ENCODE measurements at regions of chr1 and their contacts with region 1.

Region 1: DNA sequence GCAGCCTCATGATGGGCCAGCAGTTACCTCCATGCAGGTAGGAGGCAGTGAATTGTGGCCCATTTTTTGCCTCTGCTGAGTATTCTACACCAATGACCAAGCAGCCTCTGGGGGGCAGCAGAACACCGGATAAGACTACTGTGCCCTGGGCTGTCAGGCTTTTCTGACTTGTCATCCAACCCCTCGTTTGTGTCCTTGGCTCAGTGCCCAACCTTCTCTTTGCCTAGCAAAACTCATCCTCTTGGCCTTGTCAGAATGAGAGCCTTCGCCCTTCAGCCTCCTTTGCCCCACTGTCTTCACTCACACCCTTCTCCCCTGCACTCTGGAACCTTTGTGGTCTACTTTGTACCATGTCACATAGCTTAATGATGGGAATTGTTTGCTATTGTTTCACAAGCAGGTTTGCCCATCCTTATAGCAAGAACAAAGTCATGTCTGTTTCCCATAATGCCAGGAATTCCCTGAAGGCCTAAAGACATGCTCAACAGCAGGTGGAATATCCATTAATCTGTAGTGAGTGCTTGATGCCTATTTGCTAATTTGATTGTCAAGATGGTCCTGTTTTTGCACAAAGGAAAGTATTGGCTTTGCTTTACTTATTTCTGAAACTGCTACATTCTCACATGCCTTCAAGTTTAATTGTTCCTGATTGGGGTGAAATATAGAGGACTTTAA is 255.9 kb downstream of the HHAT start:
- DNase-seq: peak; percentile 90
- H3K4me3 Mint-ChIP-seq: no peak overlapping the region
- H3K27ac Mint-ChIP-seq: no peak overlapping the region
- H3K4me1 Mint-ChIP-seq: peaks cover 3% of the 10 kb centered on the region
- H3K27me3 Mint-ChIP-seq: peaks cover 6% of the 10 kb centered on the region

Region 2: GRCh38 chr1:210407207-210407886 is 177.2 kb before region 1 on chr1:
- CTCF ChIA-PET with region 1: interaction called, 9 read pairs
- intact Hi-C with region 1: loop called (anchors 1 kb)
- DNase-seq: peak; percentile 86
- H3K4me3 Mint-ChIP-seq: no peak overlapping the region
- H3K27ac Mint-ChIP-seq: no peak overlapping the region
- H3K4me1 Mint-ChIP-seq: peaks cover 5% of the 10 kb centered on the region
- H3K27me3 Mint-ChIP-seq: peaks cover 2% of the 10 kb centered on the region

Region 3: DNA sequence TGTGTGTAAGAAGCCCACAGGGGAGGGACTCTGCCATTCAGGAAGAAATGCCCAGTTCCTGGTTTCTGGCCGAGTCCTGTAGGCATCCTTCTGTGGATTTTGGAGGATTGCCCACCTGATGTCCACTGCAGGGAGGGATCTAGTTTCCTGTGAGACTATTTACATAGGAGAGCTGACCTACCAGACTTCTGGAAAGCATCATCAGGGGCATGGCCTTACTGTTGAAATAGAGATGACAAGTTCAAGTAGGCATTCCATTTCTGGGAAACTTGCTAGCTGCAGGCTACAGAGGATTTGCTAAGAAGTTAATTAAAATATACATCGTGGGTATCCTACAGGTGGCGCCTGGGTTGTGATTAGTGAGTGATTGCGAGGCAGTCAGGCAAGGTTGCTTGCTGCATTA is 107.2 kb before region 1 on chr1:
- CTCF ChIA-PET with region 1: no interaction called
- intact Hi-C with region 1: no loop called
- DNase-seq: peak; percentile 9
- H3K4me3 Mint-ChIP-seq: no peak overlapping the region
- H3K27ac Mint-ChIP-seq: no peak overlapping the region
- H3K4me1 Mint-ChIP-seq: no peaks in the 10 kb centered on the region
- H3K27me3 Mint-ChIP-seq: no peaks in the 10 kb centered on the region

Region 4: GRCh38 chr1:210541680-210542358 is 42.8 kb before region 1 on chr1:
- CTCF ChIA-PET with region 1: no interaction called
- intact Hi-C with region 1: no loop called
- DNase-seq: no peak
- H3K4me3 Mint-ChIP-seq: no peak overlapping the region
- H3K27ac Mint-ChIP-seq: no peak overlapping the region
- H3K4me1 Mint-ChIP-seq: no peaks in the 10 kb centered on the region
- H3K27me3 Mint-ChIP-seq: no peaks in the 10 kb centered on the region

Region 5: GRCh38 chr1:210951279-210951678 is 366.7 kb after region 1 on chr1:
- CTCF ChIA-PET with region 1: interaction called, 4 read pairs
- intact Hi-C with region 1: loop called (anchors 1 kb)
- DNase-seq: no peak
- H3K4me3 Mint-ChIP-seq: no peak overlapping the region
- H3K27ac Mint-ChIP-seq: no peak overlapping the region
- H3K4me1 Mint-ChIP-seq: no peaks in the 10 kb centered on the region
- H3K27me3 Mint-ChIP-seq: peaks cover 8% of the 10 kb centered on the region